ENCODE measurements at regions of chr17 and their contacts with region 1.

Region 1: DNA sequence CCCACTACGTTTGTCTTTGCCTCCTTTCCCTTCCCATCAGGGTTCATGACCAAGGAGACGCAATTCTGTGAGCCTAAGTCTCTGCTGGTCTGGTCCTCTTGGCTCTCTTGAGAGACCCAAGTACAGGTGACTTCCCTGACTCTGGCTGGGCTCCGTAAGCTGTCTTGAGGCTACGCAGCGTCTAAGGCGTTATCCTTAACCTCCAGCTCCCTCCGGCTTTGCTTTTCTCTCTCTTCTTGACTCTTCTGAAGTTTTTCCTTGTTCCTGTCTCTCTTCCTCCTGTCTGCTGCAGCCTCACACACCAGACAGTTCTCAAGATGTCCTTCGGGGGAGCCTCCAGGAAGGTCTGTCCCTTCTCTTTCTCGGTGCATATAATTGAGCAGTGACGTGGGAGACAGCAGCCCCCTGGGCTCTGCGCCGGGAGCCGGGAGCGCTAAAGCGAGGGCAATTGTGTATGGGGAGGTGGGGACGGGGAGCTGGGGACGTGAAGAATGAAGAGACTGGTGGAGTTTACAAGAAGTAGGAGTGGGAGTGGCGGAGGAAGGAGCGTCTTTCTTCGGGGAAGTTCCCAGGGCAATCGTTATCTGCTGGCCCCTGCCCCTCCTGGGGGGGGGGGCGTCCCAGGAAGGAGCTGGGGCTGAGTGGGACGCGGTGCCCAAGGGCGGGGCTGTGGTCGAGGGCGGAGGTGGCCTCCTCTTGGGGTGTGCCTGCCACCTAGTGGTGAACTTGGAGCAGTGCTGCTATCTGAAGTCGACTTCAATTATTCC is 6.9 kb upstream of the PIRT start:
- DNase-seq: peak; percentile 84
- ATAC-seq: peak; percentile 96

Region 2: DNA sequence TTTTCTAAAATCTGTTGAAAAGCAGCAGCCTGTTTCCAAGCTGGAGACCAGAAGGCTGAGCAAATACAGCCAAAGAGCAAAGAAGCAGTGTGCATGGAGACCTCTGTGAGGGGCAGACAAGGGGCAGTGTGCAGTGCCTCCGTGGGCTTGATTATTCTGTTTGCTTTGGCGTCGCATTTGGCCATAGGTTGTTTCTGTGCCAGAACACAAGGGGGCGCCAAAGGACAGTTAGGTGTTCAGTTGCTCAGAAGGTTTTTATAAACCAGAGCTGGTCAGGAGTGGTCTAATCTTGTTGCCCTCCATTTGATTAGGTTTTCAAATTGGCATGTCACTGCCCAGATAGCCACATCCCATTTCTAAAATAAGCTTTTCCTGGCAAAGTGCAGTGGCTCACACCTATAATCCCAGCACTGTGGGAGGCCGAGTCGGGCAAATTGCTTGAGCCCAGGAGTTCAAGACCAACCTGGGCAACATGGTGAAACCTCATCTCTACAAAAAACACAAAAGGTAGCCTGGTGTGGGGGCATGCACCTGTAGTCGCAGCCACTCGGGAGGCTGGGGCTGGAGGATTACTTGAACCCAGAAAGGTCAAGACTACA is 198.3 kb before region 1 on chr17:
- intact Hi-C with region 1: loop called (anchors 10 kb)
- DNase-seq: peak; percentile 85
- ATAC-seq: peak; percentile 81

Region 3: DNA sequence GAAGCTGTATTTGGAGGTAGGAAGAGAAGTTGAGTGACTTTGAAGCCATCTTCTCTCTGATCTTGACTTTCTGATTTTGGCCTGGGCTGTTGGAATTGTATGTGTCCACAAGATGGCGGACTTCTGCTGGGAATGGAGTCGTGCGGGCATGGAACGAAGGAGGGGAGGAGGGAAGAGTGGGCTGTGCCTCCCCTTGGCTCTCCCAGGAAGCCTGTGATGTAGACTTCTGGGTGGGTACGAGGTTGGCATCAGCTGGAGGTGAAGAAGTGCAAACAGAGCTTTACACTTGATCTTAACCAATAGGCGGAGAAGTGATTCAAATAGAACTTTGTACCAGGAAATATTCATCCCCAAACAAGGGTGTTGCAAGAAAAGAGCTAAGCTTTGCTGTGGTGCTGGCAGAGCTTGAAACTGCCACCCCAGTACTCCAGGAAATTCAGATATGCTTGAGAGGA is 107.6 kb before region 1 on chr17:
- intact Hi-C with region 1: loop called (anchors 5 kb)
- DNase-seq: peak; percentile 77
- ATAC-seq: peak; percentile 89

Region 4: GRCh38 chr17:10745231-10745630 is 99.6 kb before region 1 on chr17:
- intact Hi-C with region 1: loop called (anchors 5 kb)
- DNase-seq: no peak
- ATAC-seq: peak; percentile 12

Measured in sciatic nerve (tissue), 2 donors.